Endothelial cell of umbilical vein (primary cell): ENCODE measurements at regions of chr17 and their contacts with region 1.

Region 1: DNA sequence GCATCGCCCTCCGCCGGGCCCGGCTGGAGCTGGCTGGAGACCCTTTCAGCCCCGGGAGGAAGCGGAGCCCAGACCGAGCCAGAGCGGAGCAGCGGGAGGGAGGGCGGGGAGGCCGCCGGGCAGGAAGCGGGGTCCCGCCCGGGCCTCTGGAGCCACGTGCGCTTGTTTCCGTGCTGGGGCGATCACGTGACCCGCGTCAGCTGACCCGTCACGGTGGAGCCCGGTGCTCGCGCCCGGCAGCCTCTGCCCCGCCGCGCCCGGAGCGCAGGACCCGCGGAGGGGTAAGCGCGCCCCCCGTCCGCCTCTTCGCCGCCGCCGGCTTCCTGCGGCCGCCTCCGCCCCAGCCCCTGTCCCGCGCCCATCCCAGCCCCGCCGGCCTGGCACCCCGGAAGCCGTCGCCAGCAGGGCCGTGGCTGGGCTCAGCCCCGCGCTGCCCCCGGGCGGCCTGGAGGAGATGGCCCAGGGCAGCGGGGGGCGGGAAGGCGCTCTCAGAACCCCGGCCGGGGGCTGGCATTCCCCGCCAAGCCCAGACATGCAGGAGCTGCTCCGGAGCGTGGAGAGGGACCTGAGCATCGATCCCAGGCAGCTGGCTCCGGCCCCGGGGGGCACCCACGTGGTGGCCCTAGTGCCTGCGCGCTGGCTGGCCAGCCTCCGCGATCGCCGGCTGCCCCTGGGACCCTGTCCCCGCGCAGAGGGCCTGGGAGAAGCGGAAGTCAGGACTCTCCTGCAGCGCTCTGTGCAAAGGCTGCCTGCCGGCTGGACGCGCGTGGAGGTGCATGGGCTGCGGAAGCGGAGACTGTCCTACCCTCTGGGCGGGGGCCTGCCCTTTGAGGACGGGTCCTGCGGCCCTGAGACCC is at the start of gene WDR81:
- DNase-seq: peak; percentile 69
- H3K4me3 ChIP-seq: peak within 1 kb of the TSS; percentile 14 to 55 (median 16)
- H3K27ac ChIP-seq: peak within 1 kb of the TSS; percentile 22
- H3K4me1 ChIP-seq: peaks cover 7% of the 10 kb centered on the region
- H3K27me3 ChIP-seq: no peaks in the 10 kb centered on the region
- CTCF ChIP-seq: no peak
- POLR2A ChIP-seq: peak; percentile 50
- total RNA-seq, gene WDR81: 16.5 and 17.3 TPM in 2 replicates

Region 2: GRCh38 chr17:1590031-1590748 is 134.5 kb before region 1 on chr17:
- CTCF ChIA-PET with region 1: no interaction called
- POLR2A ChIA-PET with region 1: no interaction called
- dilution Hi-C with region 1: no loop called
- intact Hi-C with region 1: no loop called
- DNase-seq: peak; percentile 95
- H3K4me3 ChIP-seq: no peak overlapping the region
- H3K27ac ChIP-seq: peak overlapping the region; percentile 73
- H3K4me1 ChIP-seq: peaks cover 18% of the 10 kb centered on the region
- H3K27me3 ChIP-seq: no peaks in the 10 kb centered on the region
- CTCF ChIP-seq: no peak
- POLR2A ChIP-seq: peak; percentile 58

Region 3: DNA sequence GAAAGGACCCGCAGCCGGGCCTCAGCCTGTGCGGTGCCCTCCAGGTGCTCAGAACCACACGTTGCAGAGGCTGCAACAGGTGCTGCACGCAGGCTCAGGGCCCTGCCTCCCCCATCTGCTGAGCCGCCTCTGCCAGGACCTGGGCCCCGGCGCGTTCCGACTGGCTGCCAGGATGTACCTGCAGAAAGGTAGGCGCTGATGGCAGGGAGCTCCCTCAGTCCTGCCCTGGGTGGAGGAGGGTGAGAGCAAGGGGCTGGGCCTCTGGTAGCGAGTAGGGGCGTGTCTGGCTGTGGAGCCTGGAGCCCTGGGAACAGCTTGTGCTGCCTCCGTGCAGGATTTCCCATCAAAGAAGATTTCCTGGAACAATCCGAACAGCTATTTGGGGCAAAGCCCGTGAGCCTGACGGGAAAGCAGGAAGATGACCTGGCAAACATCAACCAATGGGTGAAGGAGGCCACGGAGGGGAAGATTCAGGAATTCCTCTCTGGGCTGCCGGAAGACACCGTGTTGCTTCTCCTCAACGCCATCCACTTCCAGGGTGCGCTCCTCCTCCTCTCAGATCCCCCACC is 22.3 kb after region 1 on chr17:
- CTCF ChIA-PET with region 1: interaction called, 11 read pairs
- POLR2A ChIA-PET with region 1: no interaction called
- dilution Hi-C with region 1: no loop called
- intact Hi-C with region 1: no loop called
- DNase-seq: peak; percentile 17
- H3K4me3 ChIP-seq: no peak overlapping the region
- H3K27ac ChIP-seq: no peak overlapping the region
- H3K4me1 ChIP-seq: no peaks in the 10 kb centered on the region
- H3K27me3 ChIP-seq: no peaks in the 10 kb centered on the region
- CTCF ChIP-seq: no peak
- POLR2A ChIP-seq: no peak

Region 4: GRCh38 chr17:1829592-1830257 is 105.0 kb after region 1 on chr17 and contains the starts of genes RPA1 and SMYD4:
- CTCF ChIA-PET with region 1: interaction called, 17 read pairs
- POLR2A ChIA-PET with region 1: interaction called, 5 read pairs
- dilution Hi-C with region 1: no loop called
- intact Hi-C with region 1: loop called (anchors 2 kb)
- DNase-seq: peak; percentile 94
- H3K4me3 ChIP-seq: peak within 1 kb of the TSS; percentile 84 to 96 (median 86)
- H3K27ac ChIP-seq: peak within 1 kb of the TSS; percentile 23
- H3K4me1 ChIP-seq: peaks cover 11% of the 10 kb centered on the region
- H3K27me3 ChIP-seq: no peaks in the 10 kb centered on the region
- CTCF ChIP-seq: no peak
- POLR2A ChIP-seq: peak; percentile 78
- total RNA-seq, gene RPA1: 123 and 137 TPM in 2 replicates
- total RNA-seq, gene SMYD4: 11.5 and 14.6 TPM in 2 replicates

Region 5: GRCh38 chr17:1865252-1866037 is 140.7 kb after region 1 on chr17:
- CTCF ChIA-PET with region 1: interaction called, 53 read pairs
- POLR2A ChIA-PET with region 1: no interaction called
- dilution Hi-C with region 1: no loop called
- intact Hi-C with region 1: loop called (anchors 5 kb)
- DNase-seq: peak; percentile 37
- H3K4me3 ChIP-seq: no peak overlapping the region
- H3K27ac ChIP-seq: no peak overlapping the region
- H3K4me1 ChIP-seq: peaks cover 5% of the 10 kb centered on the region
- H3K27me3 ChIP-seq: no peaks in the 10 kb centered on the region
- CTCF ChIP-seq: peak; percentile 33 to 46
- POLR2A ChIP-seq: no peak

Region 6: GRCh38 chr17:2120586-2121335 is 396.0 kb after region 1 on chr17:
- CTCF ChIA-PET with region 1: no interaction called
- POLR2A ChIA-PET with region 1: no interaction called
- dilution Hi-C with region 1: no loop called
- intact Hi-C with region 1: no loop called
- DNase-seq: no peak
- H3K4me3 ChIP-seq: no peak overlapping the region
- H3K27ac ChIP-seq: no peak overlapping the region
- H3K4me1 ChIP-seq: peaks cover 24% of the 10 kb centered on the region
- H3K27me3 ChIP-seq: no peaks in the 10 kb centered on the region
- CTCF ChIP-seq: no peak
- POLR2A ChIP-seq: no peak